Psoas muscle (tissue), 8 donors: ENCODE measurements at regions of chr2 and their contacts with region 1.

Region 1: GRCh38 chr2:54522624-54523281 is 66.6 kb downstream of the SPTBN1 start:
- DNase-seq: no peak
- ATAC-seq: peak; percentile 38 to 67 (median 58)
- H3K4me3 ChIP-seq: no peak overlapping the region
- H3K27ac ChIP-seq: no peak overlapping the region
- H3K4me1 ChIP-seq: peaks cover 40% of the 10 kb centered on the region
- H3K27me3 ChIP-seq: no peaks in the 10 kb centered on the region
- CTCF ChIP-seq: peak; percentile 68

Region 2: GRCh38 chr2:54558188-54559005 is 35.6 kb after region 1 on chr2:
- intact Hi-C with region 1: loop called in 1 of 2 experiments (anchors 5 kb)
- DNase-seq: peak; percentile 60 to 70
- ATAC-seq: peak; percentile 51 to 83 (median 72)
- H3K4me3 ChIP-seq: peak overlapping the region; percentile 82
- H3K27ac ChIP-seq: peak overlapping the region; percentile 83
- H3K4me1 ChIP-seq: peaks cover 40% of the 10 kb centered on the region
- H3K27me3 ChIP-seq: no peaks in the 10 kb centered on the region
- CTCF ChIP-seq: no peak

Region 3: DNA sequence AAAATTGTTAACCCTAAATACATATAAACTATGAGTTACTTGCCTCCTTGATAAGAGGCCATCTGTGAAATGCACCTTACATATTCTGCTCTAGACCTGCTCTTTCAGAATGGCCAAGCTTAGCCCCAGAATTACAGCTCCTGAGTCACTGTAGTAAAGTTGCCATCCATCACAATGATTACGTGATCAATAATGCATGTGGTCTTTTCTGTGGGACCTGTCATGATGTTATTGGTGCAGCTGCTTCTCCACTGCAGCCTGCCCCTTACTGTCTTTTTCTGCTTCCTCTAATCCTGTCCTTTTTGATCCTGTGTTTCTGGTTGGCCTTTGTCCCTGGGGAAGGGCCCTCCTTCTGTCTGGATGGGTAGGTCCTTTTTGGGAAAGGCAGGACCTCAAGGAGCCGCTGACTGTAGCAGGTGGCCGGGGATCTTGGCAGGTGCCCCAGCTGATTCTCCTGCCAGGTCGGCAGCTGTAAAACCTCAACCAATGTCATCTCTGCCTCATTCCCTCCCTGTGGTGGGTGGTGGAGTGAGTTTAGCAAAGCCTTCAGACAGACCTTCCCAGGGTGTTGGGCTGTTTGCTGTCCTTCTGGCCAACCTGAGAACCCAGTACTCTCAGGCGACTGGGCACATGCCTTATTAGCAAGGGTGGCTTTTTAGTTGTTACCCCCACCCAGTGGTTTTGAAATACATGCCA is 74.5 kb after region 1 on chr2:
- intact Hi-C with region 1: loop called in 1 of 2 experiments (anchors 5 kb)
- DNase-seq: peak; percentile 52 to 74
- ATAC-seq: peak; percentile 57 to 83 (median 70)
- H3K4me3 ChIP-seq: no peak overlapping the region
- H3K27ac ChIP-seq: no peak overlapping the region
- H3K4me1 ChIP-seq: peaks cover 72% of the 10 kb centered on the region
- H3K27me3 ChIP-seq: no peaks in the 10 kb centered on the region
- CTCF ChIP-seq: no peak

Region 4: GRCh38 chr2:54618646-54619565 is 96.2 kb after region 1 on chr2:
- intact Hi-C with region 1: loop called in 1 of 2 experiments (anchors 5 kb)
- DNase-seq: no peak
- ATAC-seq: peak in 1 of 4 donors; percentile 47
- H3K4me3 ChIP-seq: no peak overlapping the region
- H3K27ac ChIP-seq: peak overlapping the region; percentile 44
- H3K4me1 ChIP-seq: peaks cover 8% of the 10 kb centered on the region
- H3K27me3 ChIP-seq: no peaks in the 10 kb centered on the region
- CTCF ChIP-seq: no peak

Region 5: GRCh38 chr2:54657664-54658083 is 134.9 kb after region 1 on chr2:
- intact Hi-C with region 1: loop called in 1 of 2 experiments (anchors 2 kb)
- DNase-seq: peak; percentile 61 to 72
- ATAC-seq: peak; percentile 82 to 92 (median 88)
- H3K4me3 ChIP-seq: no peak overlapping the region
- H3K27ac ChIP-seq: no peak overlapping the region
- H3K4me1 ChIP-seq: no peaks in the 10 kb centered on the region
- H3K27me3 ChIP-seq: no peaks in the 10 kb centered on the region
- CTCF ChIP-seq: peak; percentile 60

Region 6: GRCh38 chr2:54704688-54705605 is 182.2 kb after region 1 on chr2:
- intact Hi-C with region 1: loop called (anchors 5 kb)
- DNase-seq: no peak
- ATAC-seq: peak; percentile 44 to 91 (median 74)
- H3K4me3 ChIP-seq: no peak overlapping the region
- H3K27ac ChIP-seq: no peak overlapping the region
- H3K4me1 ChIP-seq: no peaks in the 10 kb centered on the region
- H3K27me3 ChIP-seq: peaks cover 0 to 9% (median 4%) of the 10 kb centered on the region in 3 donors
- CTCF ChIP-seq: peak; percentile 62